ENCODE measurements at regions of chr12 and their contacts with region 1.

Region 1: GRCh38 chr12:46217541-46218321 is 51.1 kb downstream of the SLC38A1 start:
- DNase-seq: peak; percentile 76 to 85 (median 81)
- H3K4me3 ChIP-seq: peak overlapping the region; percentile 42 to 56
- H3K4me3 Mint-ChIP-seq: peak overlapping the region; percentile 78 to 90 (median 84)
- H3K27ac ChIP-seq: peak overlapping the region; percentile 87
- H3K27ac Mint-ChIP-seq: peak overlapping the region; percentile 96 to 100 (median 98)
- H3K4me1 ChIP-seq: peaks cover 99% of the 10 kb centered on the region
- H3K4me1 Mint-ChIP-seq: peaks cover 88 to 98% (median 93%) of the 10 kb centered on the region in 4 donors
- H3K27me3 ChIP-seq: no peaks in the 10 kb centered on the region
- H3K27me3 Mint-ChIP-seq: no peaks in the 10 kb centered on the region

Region 2: DNA sequence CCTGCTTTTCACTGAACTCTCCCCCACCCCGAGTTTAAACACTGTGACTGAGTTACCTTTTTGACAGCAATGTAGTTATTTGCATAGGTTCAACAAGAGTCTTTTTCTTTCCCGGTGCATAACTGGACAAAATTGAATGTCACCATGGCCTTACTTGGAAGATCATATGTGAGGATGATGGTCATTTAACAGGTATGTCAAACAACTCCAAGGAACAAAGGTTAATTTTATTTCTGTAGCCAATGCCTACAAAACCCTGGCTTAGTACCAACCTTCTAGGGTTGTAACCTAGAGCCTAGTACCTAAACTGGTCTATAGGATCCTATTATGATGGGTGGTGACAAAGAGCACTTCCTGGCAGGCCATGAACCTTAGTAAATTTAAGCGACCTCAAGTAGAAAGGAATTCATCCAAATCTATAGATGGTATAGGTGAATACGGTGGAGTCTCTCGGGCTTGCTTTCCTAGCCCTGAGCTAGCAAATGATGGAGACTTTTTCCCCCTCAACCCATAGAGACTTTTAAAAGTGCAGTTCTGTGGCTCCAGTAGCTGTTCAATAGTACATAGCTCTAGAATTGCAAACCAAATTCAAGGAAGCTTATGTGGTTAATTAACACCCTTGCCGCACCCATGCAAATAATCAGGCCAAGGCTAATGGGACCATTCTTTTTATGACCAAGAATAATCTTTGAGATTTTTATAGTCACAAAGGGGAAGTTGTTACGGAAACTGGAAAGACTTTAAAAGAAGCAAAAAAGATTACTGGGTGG is 37.9 kb before region 1 on chr12:
- CTCF ChIA-PET with region 1: no interaction called
- POLR2A ChIA-PET with region 1: interaction called, 10 read pairs
- intact Hi-C with region 1: no loop called
- DNase-seq: no peak
- H3K4me3 ChIP-seq: no peak overlapping the region
- H3K4me3 Mint-ChIP-seq: peak overlapping the region in 4 of 8 donors; percentile 0 to 26 (median 18)
- H3K27ac ChIP-seq: no peak overlapping the region
- H3K27ac Mint-ChIP-seq: peak overlapping the region; percentile 48 to 93 (median 75)
- H3K4me1 ChIP-seq: peaks cover 37% of the 10 kb centered on the region
- H3K4me1 Mint-ChIP-seq: peaks cover 43 to 62% (median 48%) of the 10 kb centered on the region in 4 donors
- H3K27me3 ChIP-seq: no peaks in the 10 kb centered on the region
- H3K27me3 Mint-ChIP-seq: no peaks in the 10 kb centered on the region

Region 3: GRCh38 chr12:46198913-46199312 is 18.8 kb before region 1 on chr12:
- CTCF ChIA-PET with region 1: interaction called, 5 read pairs
- POLR2A ChIA-PET with region 1: interaction called, 134 read pairs
- intact Hi-C with region 1: no loop called
- DNase-seq: no peak
- H3K4me3 ChIP-seq: no peak overlapping the region
- H3K4me3 Mint-ChIP-seq: peak overlapping the region in 1 of 8 donors; percentile 22
- H3K27ac ChIP-seq: no peak overlapping the region
- H3K27ac Mint-ChIP-seq: peak overlapping the region in 5 of 7 donors; percentile 25 to 73 (median 62)
- H3K4me1 ChIP-seq: no peaks in the 10 kb centered on the region
- H3K4me1 Mint-ChIP-seq: peaks cover 5 to 14% (median 7%) of the 10 kb centered on the region in 4 donors
- H3K27me3 ChIP-seq: no peaks in the 10 kb centered on the region
- H3K27me3 Mint-ChIP-seq: no peaks in the 10 kb centered on the region

Region 4: GRCh38 chr12:46233423-46233822 is 15.7 kb after region 1 on chr12:
- CTCF ChIA-PET with region 1: interaction called, 4 read pairs
- POLR2A ChIA-PET with region 1: interaction called, 5 read pairs
- intact Hi-C with region 1: loop called (anchors 1 kb)
- DNase-seq: no peak
- H3K4me3 ChIP-seq: no peak overlapping the region
- H3K4me3 Mint-ChIP-seq: peak overlapping the region in 2 of 8 donors; percentile 8 to 52
- H3K27ac ChIP-seq: no peak overlapping the region
- H3K27ac Mint-ChIP-seq: peak overlapping the region; percentile 14 to 82 (median 74)
- H3K4me1 ChIP-seq: peaks cover 70% of the 10 kb centered on the region
- H3K4me1 Mint-ChIP-seq: peaks cover 54 to 90% (median 67%) of the 10 kb centered on the region in 4 donors
- H3K27me3 ChIP-seq: no peaks in the 10 kb centered on the region
- H3K27me3 Mint-ChIP-seq: no peaks in the 10 kb centered on the region

Region 5: DNA sequence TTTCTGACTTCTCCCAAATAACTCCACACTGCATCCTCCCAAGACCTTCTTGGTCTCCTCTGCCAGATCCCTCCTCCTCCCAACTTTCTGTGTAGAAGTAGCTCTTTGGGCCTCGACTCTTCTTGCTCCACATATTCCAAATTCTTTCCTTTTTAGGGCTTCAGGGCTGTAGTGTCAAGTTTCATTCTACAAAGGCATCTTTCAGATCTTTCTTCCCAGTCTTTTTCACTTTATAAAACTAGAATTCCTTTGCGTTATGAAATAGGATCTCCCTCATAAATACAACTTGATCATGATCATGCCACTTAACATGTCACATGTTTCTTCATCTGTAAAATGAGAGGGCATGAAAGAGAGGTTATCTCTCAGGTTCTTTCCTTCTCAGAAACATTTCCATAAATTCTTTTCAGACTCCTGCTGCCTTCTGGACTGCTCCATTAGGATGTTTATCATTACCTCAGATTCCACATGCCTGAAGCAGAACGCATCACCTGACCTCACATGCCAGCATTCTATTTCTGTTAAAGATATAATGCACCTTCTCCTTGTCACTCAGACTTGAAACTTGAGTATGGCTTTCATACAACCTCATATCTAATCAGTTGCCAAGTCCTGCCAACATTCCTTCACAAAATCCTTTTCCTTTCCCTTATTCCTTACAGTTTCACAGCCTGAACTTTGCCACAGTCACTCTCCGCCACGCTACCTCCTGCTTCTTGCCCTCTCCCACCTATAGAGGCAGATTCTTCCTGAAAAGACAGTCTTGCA is 42.6 kb after region 1 on chr12:
- CTCF ChIA-PET with region 1: no interaction called
- POLR2A ChIA-PET with region 1: interaction called, 79 read pairs
- intact Hi-C with region 1: no loop called
- DNase-seq: no peak
- H3K4me3 ChIP-seq: no peak overlapping the region
- H3K4me3 Mint-ChIP-seq: no peak overlapping the region
- H3K27ac ChIP-seq: no peak overlapping the region
- H3K27ac Mint-ChIP-seq: no peak overlapping the region
- H3K4me1 ChIP-seq: peaks cover 97% of the 10 kb centered on the region
- H3K4me1 Mint-ChIP-seq: peaks cover 35 to 49% (median 40%) of the 10 kb centered on the region in 4 donors
- H3K27me3 ChIP-seq: no peaks in the 10 kb centered on the region
- H3K27me3 Mint-ChIP-seq: no peaks in the 10 kb centered on the region